ENCODE measurements at regions of chr11 and their contacts with region 1.

Region 1: GRCh38 chr11:107669893-107670601 is 41.8 kb downstream of the SLN start:
- DNase-seq: no peak
- H3K4me3 ChIP-seq: no peak overlapping the region
- H3K27ac ChIP-seq: no peak overlapping the region
- H3K4me1 ChIP-seq: no peaks in the 10 kb centered on the region
- H3K27me3 ChIP-seq: peaks cover 0 to 3% of the 10 kb centered on the region in 2 donors
- CTCF ChIP-seq: no peak
- POLR2A ChIP-seq: no peak

Region 2: DNA sequence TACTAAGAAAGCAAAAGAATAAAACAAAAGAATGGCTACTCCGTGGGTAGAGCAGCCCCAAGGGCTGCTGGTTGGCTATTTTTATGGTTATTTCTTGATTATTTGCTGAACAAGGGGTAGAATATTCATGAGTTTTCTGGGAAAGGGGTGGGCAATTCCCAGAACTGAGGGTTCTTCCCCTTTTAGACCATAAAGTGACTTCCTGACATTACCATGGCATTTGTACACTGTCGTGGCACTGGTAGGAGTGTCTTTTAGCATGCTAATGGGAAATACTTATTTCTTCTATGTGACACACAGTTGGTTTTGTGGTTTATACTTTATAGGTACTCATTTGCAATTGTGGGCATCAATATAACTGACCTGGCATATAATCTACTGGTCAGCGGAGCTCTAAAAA is 14.4 kb before region 1 on chr11:
- intact Hi-C with region 1: loop called (anchors 1 kb)
- DNase-seq: no peak
- H3K4me3 ChIP-seq: no peak overlapping the region
- H3K27ac ChIP-seq: no peak overlapping the region
- H3K4me1 ChIP-seq: no peaks in the 10 kb centered on the region
- H3K27me3 ChIP-seq: no peaks in the 10 kb centered on the region
- CTCF ChIP-seq: no peak
- POLR2A ChIP-seq: no peak

Measured in breast epithelium (tissue), 4 donors.